Activated T-helper 1 cell treated with anti-CD3 and anti-CD28 coated beads, Interleukin-12 subunit alpha, Interleukin-12 subunit beta, Interleukin-2, Interleukin-4 antibody, amounts not matched to agents 30 ng/mL and 10 ng/mL and 1 ng/mL, durations not matched to agents 14 hours and 24 hours and 36 hours (primary cell): ENCODE measurements at regions of chr9 and their contacts with region 1.

Region 1: GRCh38 chr9:109972026-109972882 is 192.3 kb downstream of the PALM2AKAP2 start:
- DNase-seq: no peak
- H3K4me3 Mint-ChIP-seq: peak overlapping the region; percentile 29
- H3K27ac Mint-ChIP-seq: peak overlapping the region; percentile 21
- H3K4me1 Mint-ChIP-seq: peaks cover 93% of the 10 kb centered on the region
- H3K27me3 Mint-ChIP-seq: no peaks in the 10 kb centered on the region

Region 2: DNA sequence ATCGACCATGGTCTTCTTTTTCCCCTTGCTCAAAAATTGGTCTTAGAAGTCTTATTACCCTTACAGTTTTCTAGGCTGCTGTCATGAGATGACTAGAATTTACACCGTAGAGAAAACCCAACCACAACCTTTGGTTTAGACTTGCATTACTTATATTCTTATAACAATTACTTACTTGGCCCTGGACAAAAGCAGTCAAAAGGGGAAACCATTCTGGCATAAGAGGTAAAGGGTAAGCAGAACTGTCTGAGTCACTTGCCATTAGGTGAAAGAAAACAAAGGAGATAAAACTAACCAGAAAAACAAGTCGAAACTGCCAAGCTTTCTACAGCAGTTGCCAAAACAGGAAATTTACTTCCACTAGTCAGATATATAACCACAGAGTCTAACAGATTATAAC is 870.4 kb before region 1 on chr9:
- intact Hi-C with region 1: loop called (anchors 5 kb)
- DNase-seq: peak; percentile 14
- H3K4me3 Mint-ChIP-seq: peak overlapping the region; percentile 46
- H3K27ac Mint-ChIP-seq: peak overlapping the region; percentile 73
- H3K4me1 Mint-ChIP-seq: peaks cover 65% of the 10 kb centered on the region
- H3K27me3 Mint-ChIP-seq: no peaks in the 10 kb centered on the region

Region 3: DNA sequence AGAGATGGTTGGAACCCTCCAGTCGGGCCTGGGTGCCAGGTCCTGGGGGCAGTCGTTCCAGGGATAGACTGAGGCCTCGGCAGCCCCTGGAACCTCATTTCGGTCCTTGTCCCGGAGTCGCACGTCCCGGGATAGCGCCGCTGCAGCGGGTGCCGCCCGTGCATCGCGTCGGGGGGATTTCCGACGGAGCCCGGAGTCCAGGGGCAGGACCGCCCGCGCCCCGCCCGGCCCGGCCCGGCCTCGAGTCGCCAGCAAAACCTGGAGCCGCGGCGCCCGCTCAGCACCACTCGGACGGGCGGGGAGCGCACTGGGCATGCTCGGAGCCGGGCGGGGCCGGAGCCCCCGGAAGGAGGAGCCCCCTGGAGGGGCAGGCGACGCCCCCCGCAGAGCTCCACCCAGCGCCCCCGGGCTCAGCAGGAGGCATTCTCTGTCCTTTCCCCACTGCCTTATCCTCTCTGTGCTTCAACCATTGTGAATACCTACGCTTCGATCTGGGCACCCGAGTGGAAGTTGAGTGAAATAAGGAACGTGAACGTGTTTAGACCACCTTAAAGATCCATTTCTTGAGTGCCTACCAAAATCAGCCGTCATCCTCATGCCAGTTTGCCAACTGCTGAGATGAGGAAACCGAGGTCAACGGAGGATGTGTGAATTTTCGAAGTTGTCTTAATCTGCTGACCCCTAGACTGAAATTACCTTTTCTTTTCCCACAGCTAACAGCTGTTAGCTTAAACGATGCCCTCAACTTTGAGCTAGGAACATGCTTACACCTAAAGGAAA is 472.4 kb before region 1 on chr9:
- intact Hi-C with region 1: no loop called
- DNase-seq: no peak
- H3K4me3 Mint-ChIP-seq: no peak overlapping the region
- H3K27ac Mint-ChIP-seq: no peak overlapping the region
- H3K4me1 Mint-ChIP-seq: peaks cover 15% of the 10 kb centered on the region
- H3K27me3 Mint-ChIP-seq: peaks cover 76% of the 10 kb centered on the region

Region 4: GRCh38 chr9:109887079-109887478 is 85.2 kb before region 1 on chr9:
- intact Hi-C with region 1: loop called (anchors 1 kb)
- DNase-seq: no peak
- H3K4me3 Mint-ChIP-seq: peak overlapping the region; percentile 64
- H3K27ac Mint-ChIP-seq: peak overlapping the region; percentile 92
- H3K4me1 Mint-ChIP-seq: peaks cover 94% of the 10 kb centered on the region
- H3K27me3 Mint-ChIP-seq: no peaks in the 10 kb centered on the region

Region 5: GRCh38 chr9:109918339-109919163 is 53.7 kb before region 1 on chr9:
- intact Hi-C with region 1: loop called (anchors 1 kb)
- DNase-seq: peak; percentile 44
- H3K4me3 Mint-ChIP-seq: peak overlapping the region; percentile 75
- H3K27ac Mint-ChIP-seq: peak overlapping the region; percentile 97
- H3K4me1 Mint-ChIP-seq: peaks cover 64% of the 10 kb centered on the region
- H3K27me3 Mint-ChIP-seq: no peaks in the 10 kb centered on the region

Region 6: GRCh38 chr9:109950710-109951443 is 21.4 kb before region 1 on chr9:
- intact Hi-C with region 1: loop called (anchors 1 kb)
- DNase-seq: no peak
- H3K4me3 Mint-ChIP-seq: peak overlapping the region; percentile 31
- H3K27ac Mint-ChIP-seq: peak overlapping the region; percentile 91
- H3K4me1 Mint-ChIP-seq: peaks cover 42% of the 10 kb centered on the region
- H3K27me3 Mint-ChIP-seq: peaks cover 2% of the 10 kb centered on the region

Region 7: DNA sequence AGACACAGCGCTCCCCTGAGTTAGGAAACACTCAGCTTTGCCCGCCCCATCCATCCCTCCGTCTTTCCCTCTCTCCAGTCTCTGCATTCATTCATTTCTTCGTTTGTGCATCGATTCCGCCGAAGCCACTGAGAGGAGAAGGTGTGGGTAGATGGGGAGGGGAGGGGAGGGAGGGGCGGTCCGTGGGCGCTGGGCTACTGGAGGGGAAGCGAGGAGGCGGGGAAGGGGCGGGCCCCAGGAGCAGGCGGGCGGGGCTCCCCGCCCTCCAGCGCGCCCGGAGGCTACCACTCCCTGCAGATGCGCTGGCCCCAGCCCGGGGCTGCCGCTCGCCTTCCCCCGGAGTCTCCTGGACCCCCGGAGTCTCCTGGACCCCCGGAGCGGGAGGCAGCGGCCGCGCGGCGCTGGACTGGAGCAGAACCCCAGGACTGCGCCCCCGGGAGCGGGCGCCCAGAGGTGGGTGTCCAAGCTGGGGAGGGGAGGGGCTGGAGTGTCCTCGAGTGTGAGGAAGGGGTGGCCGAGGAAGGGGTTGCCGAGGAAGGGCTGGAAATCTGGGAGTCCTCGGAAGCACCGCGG is 76.2 kb after region 1 on chr9:
- intact Hi-C with region 1: loop called (anchors 1 kb)
- DNase-seq: peak; percentile 81
- H3K4me3 Mint-ChIP-seq: peak overlapping the region; percentile 93
- H3K27ac Mint-ChIP-seq: peak overlapping the region; percentile 89
- H3K4me1 Mint-ChIP-seq: peaks cover 58% of the 10 kb centered on the region
- H3K27me3 Mint-ChIP-seq: no peaks in the 10 kb centered on the region

Region 8: DNA sequence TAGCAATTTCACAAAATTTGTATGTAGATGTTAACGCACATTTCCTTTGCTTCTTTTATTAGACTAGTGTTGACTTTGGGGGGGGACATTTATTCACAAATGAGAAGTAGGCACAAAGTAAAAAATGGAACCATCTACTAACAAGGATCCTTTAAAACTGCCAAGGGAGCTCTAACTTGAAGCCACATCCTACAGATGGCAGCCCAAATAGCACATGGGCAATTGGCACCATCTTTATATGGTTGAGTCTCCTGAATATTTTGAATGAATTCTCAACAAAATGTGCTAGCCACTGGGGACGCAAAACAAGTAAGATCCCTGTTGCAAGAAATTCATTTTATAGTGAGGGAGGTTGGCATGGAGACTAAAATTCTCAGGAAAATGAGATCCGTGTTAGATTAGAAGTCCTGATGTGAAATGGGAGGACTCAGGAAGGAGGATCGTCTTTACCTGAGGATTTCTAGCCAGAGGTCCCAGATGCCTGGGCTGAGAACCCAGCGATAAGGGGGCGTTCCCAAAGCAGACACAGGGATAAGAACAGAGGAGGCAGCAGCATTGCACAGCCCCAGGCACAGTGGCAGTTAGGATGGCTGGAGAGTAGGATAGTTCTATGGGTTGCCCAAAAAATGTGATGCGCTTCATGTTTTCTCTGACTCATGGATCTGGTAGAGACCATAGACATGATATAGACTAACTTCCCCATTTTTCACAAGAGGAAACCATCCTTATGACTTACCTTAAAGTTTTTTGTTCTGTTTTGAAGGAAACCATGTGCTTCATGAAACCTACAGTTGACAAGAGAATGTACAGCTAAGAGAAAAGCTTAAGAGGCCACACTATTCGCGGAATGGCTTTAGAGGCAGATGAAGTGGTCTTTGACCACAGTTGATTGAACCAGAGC is 198.4 kb after region 1 on chr9:
- intact Hi-C with region 1: no loop called
- DNase-seq: no peak
- H3K4me3 Mint-ChIP-seq: no peak overlapping the region
- H3K27ac Mint-ChIP-seq: no peak overlapping the region
- H3K4me1 Mint-ChIP-seq: peaks cover 54% of the 10 kb centered on the region
- H3K27me3 Mint-ChIP-seq: no peaks in the 10 kb centered on the region

Region 9: GRCh38 chr9:110241260-110241857 is 269.1 kb after region 1 on chr9:
- intact Hi-C with region 1: no loop called
- DNase-seq: no peak
- H3K4me3 Mint-ChIP-seq: no peak overlapping the region
- H3K27ac Mint-ChIP-seq: no peak overlapping the region
- H3K4me1 Mint-ChIP-seq: peaks cover 2% of the 10 kb centered on the region
- H3K27me3 Mint-ChIP-seq: no peaks in the 10 kb centered on the region

Region 10: DNA sequence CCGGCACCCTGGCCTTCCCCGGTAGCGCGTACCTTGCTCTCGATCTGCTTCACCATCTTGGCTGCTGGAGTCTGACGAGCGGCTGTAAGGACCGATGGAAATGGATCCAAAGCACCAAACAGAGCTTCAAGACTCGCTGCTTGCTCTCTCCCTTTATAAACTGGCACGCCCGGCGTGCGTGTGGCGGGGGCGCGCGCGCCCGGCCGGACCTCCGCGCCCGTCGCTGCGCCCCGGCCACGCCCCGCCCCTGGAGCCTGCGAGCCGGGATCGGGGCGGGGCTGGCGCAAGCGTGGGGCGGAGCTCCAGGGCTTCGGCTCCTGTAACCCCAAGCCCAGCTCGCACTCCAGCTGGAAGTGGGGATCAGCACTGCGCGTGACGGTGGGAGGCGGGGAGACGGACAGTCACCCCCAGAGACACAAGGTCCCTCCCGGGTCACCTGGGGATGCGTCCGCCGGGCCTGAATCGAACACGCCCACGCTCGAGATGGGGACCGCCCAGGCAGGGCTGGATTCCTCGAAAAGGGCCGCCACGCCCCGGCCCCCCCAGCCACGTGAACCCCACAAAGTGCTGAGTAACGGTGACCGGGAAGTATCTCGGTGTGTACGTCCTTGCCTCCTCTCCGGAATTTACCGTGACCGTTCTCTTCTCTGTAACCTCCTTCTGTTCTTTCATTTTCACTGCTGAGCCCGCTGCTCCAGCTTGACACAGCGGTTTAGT is 284.3 kb after region 1 on chr9 and contains the start of gene TXN:
- intact Hi-C with region 1: loop called (anchors 1 kb)
- DNase-seq: peak; percentile 85
- H3K4me3 Mint-ChIP-seq: peak within 1 kb of the TSS; percentile 98
- H3K27ac Mint-ChIP-seq: peak within 1 kb of the TSS; percentile 100
- H3K4me1 Mint-ChIP-seq: peaks cover 59% of the 10 kb centered on the region
- H3K27me3 Mint-ChIP-seq: peaks cover 10% of the 10 kb centered on the region
- total RNA-seq, gene TXN: 412 and 422 TPM in 2 replicates